ENCODE measurements at regions of chr3 and their contacts with region 1.

Region 1: GRCh38 chr3:142586803-142587406 is 8.4 kb upstream of the ATR start:
- DNase-seq: peak; percentile 49 to 74
- H3K4me3 ChIP-seq: no peak overlapping the region
- H3K4me3 Mint-ChIP-seq: no peak overlapping the region
- H3K27ac Mint-ChIP-seq: no peak overlapping the region
- H3K4me1 ChIP-seq: no peaks in the 10 kb centered on the region
- H3K4me1 Mint-ChIP-seq: no peaks in the 10 kb centered on the region
- H3K27me3 ChIP-seq: no peaks in the 10 kb centered on the region; the same call in none of the 2 replicates
- H3K27me3 Mint-ChIP-seq: peaks cover 11% of the 10 kb centered on the region
- CTCF ChIP-seq: peak; percentile 59 to 65

Region 2: GRCh38 chr3:142680710-142681109 is 93.8 kb after region 1 on chr3:
- CTCF ChIA-PET with region 1: interaction called, 30 read pairs
- POLR2A ChIA-PET with region 1: interaction called, 3 read pairs
- intact Hi-C with region 1: loop called (anchors 1 kb)
- DNase-seq: peak in 1 of 2 experiments; percentile 6
- H3K4me3 ChIP-seq: no peak overlapping the region
- H3K4me3 Mint-ChIP-seq: no peak overlapping the region
- H3K27ac Mint-ChIP-seq: no peak overlapping the region
- H3K4me1 ChIP-seq: no peaks in the 10 kb centered on the region
- H3K4me1 Mint-ChIP-seq: no peaks in the 10 kb centered on the region
- H3K27me3 ChIP-seq: no peaks in the 10 kb centered on the region
- H3K27me3 Mint-ChIP-seq: no peaks in the 10 kb centered on the region
- CTCF ChIP-seq: peak in 1 of 2 experiments; percentile 12

Region 3: DNA sequence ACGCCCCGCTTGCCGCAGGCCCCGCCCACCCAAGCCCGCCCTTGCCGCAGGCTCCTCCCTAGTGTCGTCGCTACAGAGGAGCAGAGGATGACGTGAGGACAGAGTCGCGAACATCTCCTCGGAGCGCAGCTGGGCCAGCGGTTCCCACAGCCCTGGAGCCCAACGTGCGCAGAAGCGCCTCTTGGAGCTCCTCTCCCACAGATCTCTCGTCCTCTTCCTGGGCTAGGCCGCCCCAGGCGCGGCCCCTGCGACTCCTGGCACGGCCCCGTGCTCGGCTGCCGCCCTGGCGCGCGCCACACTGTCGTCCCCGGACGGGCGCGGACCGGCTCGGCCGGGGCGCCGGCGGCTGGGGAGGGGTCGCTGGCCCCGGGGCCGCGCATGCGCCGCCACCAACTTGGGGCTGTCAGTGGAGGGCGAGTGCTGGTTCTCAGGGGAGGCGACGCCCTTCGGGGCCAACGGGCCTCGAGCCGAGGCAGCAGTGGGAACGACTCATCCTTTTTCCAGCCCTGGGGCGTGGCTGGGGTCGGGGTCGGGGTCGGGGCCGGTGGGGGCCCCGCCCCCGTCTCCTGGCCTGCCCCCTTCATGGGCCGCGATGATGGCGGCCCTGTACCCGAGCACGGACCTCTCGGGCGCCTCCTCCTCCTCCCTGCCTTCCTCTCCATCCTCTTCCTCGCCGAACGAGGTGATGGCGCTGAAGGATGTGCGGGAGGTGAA is 137.2 kb after region 1 on chr3 and contains the start of gene TRPC1:
- CTCF ChIA-PET with region 1: interaction called, 3 read pairs
- POLR2A ChIA-PET with region 1: no interaction called
- intact Hi-C with region 1: loop called (anchors 2 kb)
- DNase-seq: peak; percentile 81 to 85
- H3K4me3 ChIP-seq: peak within 1 kb of the TSS; percentile 87
- H3K4me3 Mint-ChIP-seq: peak within 1 kb of the TSS; percentile 91
- H3K27ac Mint-ChIP-seq: peak within 1 kb of the TSS; percentile 94
- H3K4me1 ChIP-seq: peaks cover 10% of the 10 kb centered on the region; the same call in 1 of the 2 replicates
- H3K4me1 Mint-ChIP-seq: no peaks in the 10 kb centered on the region
- H3K27me3 ChIP-seq: no peaks in the 10 kb centered on the region
- H3K27me3 Mint-ChIP-seq: peaks cover 3% of the 10 kb centered on the region
- CTCF ChIP-seq: no peak
- total RNA-seq, gene TRPC1: 7.9 and 8.3 TPM in 2 replicates

Region 4: DNA sequence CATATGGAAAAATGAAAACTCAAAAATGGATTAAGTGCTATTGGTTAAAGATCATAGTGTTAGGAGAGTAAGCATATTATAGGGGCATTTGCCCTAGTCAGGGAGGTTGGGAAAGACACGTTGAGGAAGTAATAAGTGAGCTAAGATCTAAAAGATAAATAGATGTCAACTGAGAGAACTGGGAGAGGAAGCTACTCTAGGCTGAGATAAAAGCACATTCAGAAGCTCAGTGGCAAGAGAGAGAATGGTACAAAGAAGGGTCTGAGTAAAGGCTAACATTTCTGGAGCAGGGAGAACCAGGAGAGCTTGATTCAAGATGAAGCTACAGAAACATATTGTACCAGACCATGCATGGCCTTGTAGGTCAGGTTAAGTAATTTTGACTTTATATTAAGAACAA is 200.8 kb after region 1 on chr3:
- CTCF ChIA-PET with region 1: no interaction called
- POLR2A ChIA-PET with region 1: no interaction called
- intact Hi-C with region 1: no loop called
- DNase-seq: no peak
- H3K4me3 ChIP-seq: no peak overlapping the region
- H3K4me3 Mint-ChIP-seq: no peak overlapping the region
- H3K27ac Mint-ChIP-seq: no peak overlapping the region
- H3K4me1 ChIP-seq: peaks cover 18% of the 10 kb centered on the region
- H3K4me1 Mint-ChIP-seq: peaks cover 20% of the 10 kb centered on the region
- H3K27me3 ChIP-seq: no peaks in the 10 kb centered on the region
- H3K27me3 Mint-ChIP-seq: no peaks in the 10 kb centered on the region
- CTCF ChIP-seq: no peak

Region 5: DNA sequence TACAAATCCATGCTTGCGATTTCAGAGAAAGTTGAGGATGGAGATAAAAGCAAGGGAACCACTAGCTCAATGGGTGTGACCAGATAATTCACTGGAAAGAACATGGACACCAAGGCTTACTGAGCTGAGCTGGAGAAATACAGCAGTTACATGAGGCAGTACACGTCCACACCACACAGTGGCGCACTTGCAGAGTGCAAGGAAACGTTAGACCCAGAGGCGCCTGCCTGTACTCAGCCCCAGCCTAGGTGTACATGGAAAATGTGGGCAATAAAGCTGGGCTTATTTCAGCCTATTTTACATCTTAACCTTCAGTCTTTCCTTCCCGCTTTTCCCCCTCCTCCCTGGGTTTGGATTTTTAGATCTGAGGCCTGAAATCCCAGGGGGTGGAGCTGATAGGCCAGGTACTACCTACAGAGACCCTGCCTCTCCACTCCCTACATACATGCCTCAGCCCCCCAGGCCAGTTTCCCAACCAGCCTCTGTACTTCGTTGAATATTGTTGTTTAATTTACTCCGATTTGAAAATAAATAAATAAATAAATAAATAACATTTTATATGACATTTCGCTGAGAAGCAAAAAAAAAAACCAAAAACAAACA is 241.9 kb after region 1 on chr3:
- CTCF ChIA-PET with region 1: interaction called, 5 read pairs
- POLR2A ChIA-PET with region 1: no interaction called
- intact Hi-C with region 1: loop called (anchors 1 kb)
- DNase-seq: peak; percentile 78
- H3K4me3 ChIP-seq: no peak overlapping the region
- H3K4me3 Mint-ChIP-seq: no peak overlapping the region
- H3K27ac Mint-ChIP-seq: no peak overlapping the region
- H3K4me1 ChIP-seq: no peaks in the 10 kb centered on the region
- H3K4me1 Mint-ChIP-seq: no peaks in the 10 kb centered on the region
- H3K27me3 ChIP-seq: no peaks in the 10 kb centered on the region
- H3K27me3 Mint-ChIP-seq: peaks cover 2% of the 10 kb centered on the region
- CTCF ChIP-seq: peak; percentile 79 to 84

Region 6: DNA sequence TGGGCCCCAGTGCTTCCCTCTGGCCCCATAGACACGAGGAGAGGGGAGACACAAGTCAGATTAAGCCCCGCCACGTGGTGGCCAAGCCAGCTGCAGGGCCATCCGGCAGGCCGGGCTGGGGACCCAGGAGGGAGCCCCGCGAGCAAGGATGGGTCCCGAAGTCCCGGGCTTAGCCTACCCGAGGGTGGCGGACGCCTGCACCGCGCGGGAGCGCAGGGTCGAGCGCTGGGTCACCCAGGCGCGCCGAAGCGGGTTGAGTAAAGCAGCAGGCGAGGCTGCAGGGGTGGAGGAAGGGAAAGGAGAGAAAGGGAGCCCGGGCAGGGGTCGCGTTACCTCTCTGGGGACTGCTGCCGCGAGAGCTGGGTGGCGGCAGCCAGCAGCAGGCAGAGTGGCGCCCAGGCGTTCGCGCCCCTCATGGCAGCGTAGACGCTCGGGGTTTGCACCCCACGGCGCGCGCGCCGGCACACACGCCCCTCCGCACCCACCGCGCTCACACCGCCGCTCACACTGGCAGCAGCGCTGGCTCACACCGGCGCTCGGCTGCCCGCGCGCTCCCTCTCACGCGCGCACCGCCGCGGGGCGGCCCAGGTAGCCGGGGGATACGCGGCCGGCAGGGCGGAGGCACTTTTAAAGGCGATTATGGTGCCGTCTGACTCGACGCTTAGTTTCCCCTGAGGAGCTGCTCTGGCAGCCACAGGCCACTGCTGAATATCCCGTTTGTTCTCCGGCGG is 301.7 kb after region 1 on chr3 and contains the start of gene PCOLCE2:
- CTCF ChIA-PET with region 1: no interaction called
- POLR2A ChIA-PET with region 1: no interaction called
- intact Hi-C with region 1: loop called (anchors 5 kb)
- DNase-seq: peak in 1 of 2 experiments; percentile 46
- H3K4me3 ChIP-seq: peak within 1 kb of the TSS; percentile 55
- H3K4me3 Mint-ChIP-seq: peak within 1 kb of the TSS; percentile 79
- H3K27ac Mint-ChIP-seq: no peak within 1 kb of the TSS
- H3K4me1 ChIP-seq: no peaks in the 10 kb centered on the region
- H3K4me1 Mint-ChIP-seq: no peaks in the 10 kb centered on the region
- H3K27me3 ChIP-seq: no peaks in the 10 kb centered on the region
- H3K27me3 Mint-ChIP-seq: peaks cover 10% of the 10 kb centered on the region
- CTCF ChIP-seq: no peak
- total RNA-seq, gene PCOLCE2: 0.34 and 1.1 TPM in 2 replicates

Region 7: DNA sequence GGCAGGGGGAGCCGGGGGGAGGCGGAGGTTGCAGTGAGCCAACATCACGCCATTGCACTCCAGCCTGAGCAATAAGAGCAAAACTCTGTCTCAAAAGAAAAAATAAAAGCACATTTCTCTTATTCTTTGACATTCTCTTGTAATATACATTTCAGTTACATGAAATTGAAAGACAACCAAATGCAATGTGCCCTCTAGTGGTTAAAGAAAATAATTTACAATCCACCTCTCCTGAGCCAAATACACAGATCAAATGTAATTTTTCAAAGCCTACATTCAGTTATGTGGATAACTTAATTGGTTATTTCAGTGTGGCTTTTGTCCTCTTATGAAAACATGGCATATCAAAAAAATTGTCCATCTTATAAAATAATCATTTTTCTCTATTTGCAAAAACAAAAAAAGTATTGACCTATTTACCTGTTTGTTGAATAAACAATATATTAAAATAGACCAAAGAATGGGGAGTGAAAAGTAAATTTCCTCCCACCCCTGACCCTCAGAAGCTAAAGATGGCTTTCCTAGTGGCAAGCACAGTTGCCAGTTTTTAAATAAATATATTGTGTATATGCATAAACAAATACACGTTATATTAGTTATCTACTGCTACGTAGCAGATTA is 400.3 kb after region 1 on chr3:
- CTCF ChIA-PET with region 1: no interaction called
- POLR2A ChIA-PET with region 1: no interaction called
- intact Hi-C with region 1: loop called (anchors 2 kb)
- DNase-seq: no peak
- H3K4me3 ChIP-seq: no peak overlapping the region
- H3K4me3 Mint-ChIP-seq: no peak overlapping the region
- H3K27ac Mint-ChIP-seq: no peak overlapping the region
- H3K4me1 ChIP-seq: no peaks in the 10 kb centered on the region
- H3K4me1 Mint-ChIP-seq: no peaks in the 10 kb centered on the region
- H3K27me3 ChIP-seq: no peaks in the 10 kb centered on the region
- H3K27me3 Mint-ChIP-seq: peaks cover 10% of the 10 kb centered on the region
- CTCF ChIP-seq: peak; percentile 44 to 63

Region 8: DNA sequence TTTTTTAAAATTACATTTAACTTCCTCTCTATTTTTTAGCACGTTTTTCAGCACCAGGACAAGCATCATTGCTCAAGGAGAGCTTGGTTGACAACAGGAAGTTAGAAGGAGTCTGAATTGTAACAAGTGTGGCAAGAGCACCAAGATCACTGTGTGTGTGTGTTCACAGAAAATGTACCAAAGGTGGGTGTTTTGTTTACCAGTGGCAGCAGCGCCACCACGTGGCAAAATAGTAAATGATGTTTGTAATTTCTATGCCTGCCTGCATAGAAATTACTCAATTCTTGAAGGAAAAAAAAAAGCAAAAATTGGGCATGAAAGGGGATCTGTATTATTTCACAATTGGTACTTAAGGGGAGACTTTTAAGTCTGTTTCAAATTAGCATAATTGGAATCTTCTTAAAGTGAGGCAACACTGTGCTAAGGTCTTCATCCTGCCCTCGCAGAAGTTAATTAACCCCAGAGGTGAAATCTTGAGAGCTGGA is 407.1 kb after region 1 on chr3:
- CTCF ChIA-PET with region 1: no interaction called
- POLR2A ChIA-PET with region 1: no interaction called
- intact Hi-C with region 1: loop called (anchors 1 kb)
- DNase-seq: peak; percentile 46 to 62
- H3K4me3 ChIP-seq: no peak overlapping the region
- H3K4me3 Mint-ChIP-seq: no peak overlapping the region
- H3K27ac Mint-ChIP-seq: no peak overlapping the region
- H3K4me1 ChIP-seq: no peaks in the 10 kb centered on the region
- H3K4me1 Mint-ChIP-seq: no peaks in the 10 kb centered on the region
- H3K27me3 ChIP-seq: no peaks in the 10 kb centered on the region
- H3K27me3 Mint-ChIP-seq: peaks cover 3% of the 10 kb centered on the region
- CTCF ChIP-seq: peak; percentile 65 to 68

Measured in Caco-2 (cell line).